Psoas muscle (tissue), 8 donors: ENCODE measurements at regions of chr4 and their contacts with region 1.

Region 1: GRCh38 chr4:150242820-150243458 is 164.7 kb downstream of the DCLK2 start:
- DNase-seq: no peak
- ATAC-seq: no peak
- H3K4me3 ChIP-seq: no peak overlapping the region
- H3K27ac ChIP-seq: no peak overlapping the region
- H3K4me1 ChIP-seq: no peaks in the 10 kb centered on the region
- H3K27me3 ChIP-seq: no peaks in the 10 kb centered on the region
- CTCF ChIP-seq: peak; percentile 74

Region 2: DNA sequence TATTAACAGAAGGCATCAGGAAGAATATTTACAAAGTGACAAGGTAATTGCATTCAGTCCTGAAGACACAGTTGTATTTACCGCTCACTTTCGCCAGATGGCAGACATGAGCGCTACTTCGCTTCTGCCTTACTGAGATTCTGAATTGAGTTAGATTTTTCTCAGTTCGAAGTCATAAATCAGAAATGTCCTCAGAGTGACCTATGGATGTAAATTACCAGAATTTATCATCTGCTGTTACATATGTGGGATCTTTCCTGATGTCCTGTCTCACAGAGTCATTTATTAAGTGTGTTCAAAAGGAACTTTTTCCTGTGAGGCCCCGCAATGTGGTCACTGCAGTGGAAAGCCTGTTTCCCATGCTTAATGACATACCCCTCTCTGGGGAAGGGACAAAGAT is 262.0 kb before region 1 on chr4:
- intact Hi-C with region 1: loop called in 1 of 2 experiments (anchors 5 kb)
- DNase-seq: peak; percentile 21 to 52
- ATAC-seq: peak in 1 of 4 donors; percentile 71
- H3K4me3 ChIP-seq: no peak overlapping the region
- H3K27ac ChIP-seq: no peak overlapping the region
- H3K4me1 ChIP-seq: no peaks in the 10 kb centered on the region
- H3K27me3 ChIP-seq: no peaks in the 10 kb centered on the region
- CTCF ChIP-seq: peak; percentile 80

Region 3: DNA sequence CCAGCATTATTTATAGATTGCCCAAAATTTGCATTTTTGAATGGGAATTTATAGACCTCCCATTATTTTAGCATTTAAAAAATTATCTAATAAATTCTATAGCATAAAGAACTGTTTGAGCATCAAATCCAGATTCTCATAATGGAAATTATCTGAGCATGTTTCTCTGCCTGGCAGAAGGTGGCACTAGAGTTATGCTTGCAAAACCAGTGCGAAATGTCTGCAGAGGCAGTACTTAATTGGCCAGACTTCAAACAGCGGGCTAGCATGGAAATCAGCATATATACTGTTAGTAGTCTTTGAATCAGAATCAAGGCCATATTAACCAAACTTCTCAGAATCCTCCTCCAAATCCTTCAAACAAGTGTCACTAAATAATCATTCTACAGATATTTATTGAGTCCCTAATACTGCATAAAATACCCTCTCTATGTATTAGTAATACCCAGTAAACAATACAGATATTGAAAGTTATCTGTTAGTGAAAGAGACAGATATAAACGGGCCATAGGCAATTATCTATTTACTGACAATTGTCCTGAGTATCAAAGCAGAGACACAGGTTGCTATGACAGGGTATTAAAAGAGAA is 243.4 kb before region 1 on chr4:
- intact Hi-C with region 1: loop called in 1 of 2 experiments (anchors 5 kb)
- DNase-seq: no peak
- ATAC-seq: peak in 1 of 4 donors; percentile 65
- H3K4me3 ChIP-seq: no peak overlapping the region
- H3K27ac ChIP-seq: no peak overlapping the region
- H3K4me1 ChIP-seq: no peaks in the 10 kb centered on the region
- H3K27me3 ChIP-seq: no peaks in the 10 kb centered on the region
- CTCF ChIP-seq: peak; percentile 54

Region 4: GRCh38 chr4:150007512-150007911 is 235.4 kb before region 1 on chr4:
- intact Hi-C with region 1: loop called (anchors 5 kb)
- DNase-seq: no peak
- ATAC-seq: no peak
- H3K4me3 ChIP-seq: no peak overlapping the region
- H3K27ac ChIP-seq: no peak overlapping the region
- H3K4me1 ChIP-seq: no peaks in the 10 kb centered on the region
- H3K27me3 ChIP-seq: no peaks in the 10 kb centered on the region
- CTCF ChIP-seq: no peak